AG04450 (cell line): ENCODE measurements at regions of chr5 and their contacts with region 1.

Region 1: DNA sequence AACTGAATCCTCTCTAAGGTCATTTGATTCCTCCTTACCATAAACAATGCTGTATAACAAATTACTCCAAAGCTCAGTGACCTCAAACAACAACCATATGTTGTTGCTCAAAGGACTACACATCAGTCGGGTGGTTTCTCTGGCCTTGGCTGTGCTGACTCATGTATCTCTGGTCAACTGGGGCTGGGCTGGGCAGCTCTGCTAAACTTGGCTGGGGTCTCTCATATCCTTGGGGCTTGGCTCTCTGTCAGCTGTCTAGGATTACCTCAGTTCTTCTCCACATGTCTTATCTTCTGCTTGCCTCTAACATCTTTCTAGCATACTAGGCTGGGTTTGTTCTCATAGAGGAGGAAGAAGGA is 86.4 kb downstream of the GALNT10 start:
- DNase-seq: peak; percentile 94
- H3K4me3 ChIP-seq: no peak overlapping the region
- H3K27ac ChIP-seq: peak overlapping the region; percentile 68
- H3K27me3 ChIP-seq: no peaks in the 10 kb centered on the region
- CTCF ChIP-seq: no peak

Region 2: DNA sequence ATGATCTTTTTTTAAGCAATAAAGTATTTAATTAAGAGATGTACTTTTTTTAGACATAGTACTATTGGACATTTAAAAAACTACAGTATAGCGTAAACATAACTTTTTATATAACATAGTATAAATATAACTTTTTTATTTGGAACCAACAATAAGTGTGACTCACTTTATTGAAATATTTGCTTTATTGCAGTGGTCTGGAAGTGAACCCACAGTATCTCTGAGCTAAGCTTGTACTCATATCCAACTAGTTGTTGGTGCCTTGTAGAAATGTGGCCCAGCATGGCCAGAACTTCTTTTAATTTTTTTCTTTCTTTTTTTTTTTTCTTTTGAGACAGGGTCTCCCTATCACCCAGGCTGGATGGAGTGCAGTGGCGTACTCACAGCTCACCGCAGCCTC is 147.9 kb before region 1 on chr5:
- CTCF ChIA-PET with region 1: no interaction called
- POLR2A ChIA-PET with region 1: no interaction called
- DNase-seq: no peak
- H3K4me3 ChIP-seq: no peak overlapping the region
- H3K27ac ChIP-seq: no peak overlapping the region
- H3K27me3 ChIP-seq: peaks cover 14% of the 10 kb centered on the region
- CTCF ChIP-seq: no peak

Region 3: GRCh38 chr5:154287136-154287535 is 10.2 kb after region 1 on chr5:
- CTCF ChIA-PET with region 1: no interaction called
- POLR2A ChIA-PET with region 1: interaction called, 22 read pairs
- DNase-seq: peak; percentile 49
- H3K4me3 ChIP-seq: no peak overlapping the region
- H3K27ac ChIP-seq: no peak overlapping the region
- H3K27me3 ChIP-seq: no peaks in the 10 kb centered on the region
- CTCF ChIP-seq: no peak

Region 4: DNA sequence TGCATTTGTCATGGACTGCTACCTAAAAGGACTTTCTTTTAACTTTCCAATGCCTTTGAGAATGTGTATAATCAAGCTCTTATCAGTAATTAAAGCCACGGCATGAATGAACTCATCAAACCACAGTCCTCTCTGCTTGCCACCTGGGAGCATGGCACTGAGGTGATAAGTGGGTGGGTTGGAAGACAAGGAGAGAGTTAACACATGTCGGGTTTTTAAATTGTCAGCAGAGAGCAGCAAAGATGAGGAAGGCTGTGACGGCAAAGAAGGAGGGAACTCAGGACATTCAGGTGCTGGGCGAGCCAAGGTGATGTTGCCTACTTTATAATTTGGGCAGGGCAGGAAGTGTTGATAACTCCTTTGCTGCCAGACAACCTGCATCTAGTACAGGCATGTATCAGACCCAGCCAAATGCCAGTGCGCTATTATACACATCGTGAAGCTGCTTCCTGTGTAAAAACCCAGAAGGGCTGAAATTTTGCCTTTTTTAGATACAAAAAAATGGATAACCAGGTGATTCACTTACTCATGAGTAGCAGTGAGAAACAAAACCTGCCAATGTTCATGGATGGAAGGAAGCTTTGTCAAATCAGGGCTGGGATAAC is 1005.7 kb after region 1 on chr5:
- CTCF ChIA-PET with region 1: no interaction called
- POLR2A ChIA-PET with region 1: no interaction called
- DNase-seq: no peak
- H3K4me3 ChIP-seq: no peak overlapping the region
- H3K27ac ChIP-seq: no peak overlapping the region
- H3K27me3 ChIP-seq: no peaks in the 10 kb centered on the region
- CTCF ChIP-seq: no peak